AG04449 (cell line): ENCODE measurements at regions of chr14 and their contacts with region 1.

Region 1: DNA sequence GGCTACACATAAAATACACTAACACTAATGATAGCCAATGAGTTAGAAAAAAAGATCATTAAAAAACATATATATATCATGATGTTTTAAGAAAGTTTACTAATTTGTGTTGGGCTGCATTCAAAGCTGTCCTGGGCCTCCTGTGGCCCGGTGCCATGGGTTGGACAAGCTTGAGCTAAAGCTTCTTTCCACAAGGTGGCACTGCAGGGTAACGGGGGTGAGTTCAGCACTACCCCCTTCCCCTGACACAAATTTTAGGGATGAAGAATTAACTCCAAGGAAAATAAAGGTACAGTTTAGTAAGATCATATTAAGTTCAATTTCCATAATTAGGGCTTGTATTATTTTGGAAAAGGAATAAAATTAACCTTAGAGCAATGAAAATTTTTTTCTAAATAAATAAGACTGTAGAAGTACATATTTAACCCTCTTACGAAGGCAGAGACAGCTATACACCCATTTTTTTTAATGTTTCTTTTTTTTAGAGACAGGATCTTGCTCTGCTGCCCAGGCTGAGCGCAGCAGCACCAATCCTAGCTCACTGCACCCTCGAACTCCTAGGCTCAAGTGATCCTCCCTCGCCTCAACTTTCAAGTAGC is 38.9 kb downstream of the PPP1R13B start:
- DNase-seq: no peak
- H3K4me3 ChIP-seq: no peak overlapping the region
- CTCF ChIP-seq: peak; percentile 82

Region 2: GRCh38 chr14:103819503-103820307 is 11.2 kb after region 1 on chr14:
- CTCF ChIA-PET with region 1: interaction called, 43 read pairs
- POLR2A ChIA-PET with region 1: no interaction called
- DNase-seq: no peak
- H3K4me3 ChIP-seq: no peak overlapping the region
- CTCF ChIP-seq: no peak

Region 3: DNA sequence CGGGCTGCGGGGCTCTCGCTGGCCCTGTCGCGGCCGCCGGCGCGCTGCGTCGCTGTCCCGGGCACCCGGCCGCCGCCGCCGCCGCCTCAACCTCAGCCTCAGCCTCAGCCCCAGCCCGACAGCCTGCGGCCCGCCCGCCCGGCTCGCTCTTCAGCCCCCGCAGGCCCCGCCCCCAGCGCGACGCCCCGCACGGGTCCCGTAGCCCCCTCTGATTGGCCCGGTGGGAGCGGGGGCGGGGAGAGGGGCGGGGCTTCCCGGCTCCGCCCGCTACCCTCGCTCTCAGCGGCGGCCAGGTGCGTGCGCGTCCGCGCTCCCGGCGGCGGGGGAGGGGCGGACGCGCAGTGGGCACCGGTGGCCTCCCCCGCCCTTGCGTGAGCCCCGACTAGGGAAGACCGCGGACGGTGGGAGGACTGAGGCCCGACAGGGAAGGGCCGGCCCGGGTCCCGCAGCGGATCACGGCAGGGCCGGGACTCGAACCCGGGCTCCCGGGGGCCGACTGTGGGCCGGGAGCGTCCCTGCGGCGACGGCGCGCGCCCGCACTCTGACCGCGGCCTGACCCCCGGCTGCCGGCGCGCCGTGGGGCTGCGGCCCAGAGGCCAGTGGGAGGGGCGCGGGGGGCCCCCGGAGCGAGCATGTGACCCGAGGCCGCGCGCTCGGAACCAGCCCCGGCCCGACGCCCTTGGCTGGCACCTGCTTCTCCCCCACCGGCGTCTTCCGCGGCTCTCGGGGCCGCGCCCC is 39.1 kb after region 1 on chr14 and contains the start of gene PPP1R13B:
- CTCF ChIA-PET with region 1: interaction called, 11 read pairs
- POLR2A ChIA-PET with region 1: no interaction called
- DNase-seq: no peak
- H3K4me3 ChIP-seq: peak within 1 kb of the TSS; percentile 70
- CTCF ChIP-seq: no peak

Region 4: GRCh38 chr14:103920981-103921854 is 112.7 kb after region 1 on chr14:
- CTCF ChIA-PET with region 1: interaction called, 23 read pairs
- POLR2A ChIA-PET with region 1: no interaction called
- DNase-seq: peak; percentile 36
- H3K4me3 ChIP-seq: peak overlapping the region; percentile 73
- CTCF ChIP-seq: peak; percentile 100